CD8-positive, alpha-beta T cell (primary cell): ENCODE measurements at regions of chr12 and their contacts with region 1.

Region 1: DNA sequence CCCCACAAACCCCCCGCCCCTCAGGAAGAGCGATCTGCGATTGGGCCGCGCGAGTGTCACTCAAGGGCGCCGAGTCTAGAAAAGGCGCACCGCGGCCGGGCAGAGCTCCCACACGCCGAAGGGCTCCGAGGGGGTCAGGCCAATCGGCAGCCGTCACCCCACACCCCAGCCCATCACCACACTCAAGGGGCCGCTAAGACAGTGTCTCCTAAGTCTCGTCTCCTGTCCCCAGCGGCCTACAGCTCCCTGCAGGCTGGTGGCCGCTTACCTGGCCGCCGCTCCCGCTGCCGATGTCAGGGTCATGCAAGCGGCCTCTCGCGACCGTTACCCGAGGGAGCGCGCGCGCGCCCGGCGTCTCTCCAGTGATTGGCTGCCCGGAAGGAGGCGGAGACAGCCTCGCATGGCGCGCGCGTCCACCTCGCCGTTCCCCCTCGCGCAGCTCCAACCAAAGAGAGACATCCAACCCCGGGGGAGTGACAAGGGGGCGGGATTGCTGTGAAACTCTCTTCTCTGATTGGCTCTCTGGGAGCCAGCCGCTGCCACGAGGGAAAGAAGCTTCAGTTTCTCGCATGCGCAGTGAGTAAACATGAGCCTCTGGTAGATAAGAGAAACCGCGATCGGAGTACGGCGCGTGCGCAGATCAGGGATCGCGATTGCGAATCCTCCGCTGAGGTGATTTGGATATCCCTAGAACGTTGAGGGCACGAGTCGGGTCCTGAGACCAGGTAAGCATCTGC is at the starts of genes MPHOSPH9 and MTRFR:
- DNase-seq: peak; percentile 96 to 100 (median 98)
- ATAC-seq: peak; percentile 90
- H3K4me3 ChIP-seq: peak within 1 kb of the TSS; percentile 98 to 99
- H3K4me3 Mint-ChIP-seq: peak within 1 kb of the TSS; percentile 94
- H3K27ac ChIP-seq: peak within 1 kb of the TSS; percentile 91 to 94
- H3K27ac Mint-ChIP-seq: peak within 1 kb of the TSS; percentile 100
- H3K4me1 ChIP-seq: peaks cover 80% of the 10 kb centered on the region
- H3K4me1 Mint-ChIP-seq: peaks cover 74% of the 10 kb centered on the region
- H3K27me3 ChIP-seq: no peaks in the 10 kb centered on the region
- H3K27me3 Mint-ChIP-seq: no peaks in the 10 kb centered on the region
- CTCF ChIP-seq: no peak
- total RNA-seq, gene MPHOSPH9: 82.2 to 84.4 TPM
- total RNA-seq, gene MTRFR: 37.7 to 39.4 TPM

Region 2: GRCh38 chr12:122688291-122688690 is 544.7 kb before region 1 on chr12:
- CTCF ChIA-PET with region 1: no interaction called
- POLR2A ChIA-PET with region 1: no interaction called
- intact Hi-C with region 1: no loop called
- DNase-seq: no peak
- ATAC-seq: no peak
- H3K4me3 ChIP-seq: no peak overlapping the region
- H3K4me3 Mint-ChIP-seq: no peak overlapping the region
- H3K27ac ChIP-seq: no peak overlapping the region
- H3K27ac Mint-ChIP-seq: no peak overlapping the region
- H3K4me1 ChIP-seq: no peaks in the 10 kb centered on the region
- H3K4me1 Mint-ChIP-seq: no peaks in the 10 kb centered on the region
- H3K27me3 ChIP-seq: no peaks in the 10 kb centered on the region
- H3K27me3 Mint-ChIP-seq: no peaks in the 10 kb centered on the region
- CTCF ChIP-seq: no peak

Region 3: GRCh38 chr12:122860346-122861090 is 372.5 kb before region 1 on chr12:
- CTCF ChIA-PET with region 1: interaction called, 7 read pairs
- POLR2A ChIA-PET with region 1: no interaction called
- intact Hi-C with region 1: loop called (anchors 1 kb)
- DNase-seq: peak; percentile 65 to 92 (median 82)
- ATAC-seq: peak; percentile 61
- H3K4me3 ChIP-seq: no peak overlapping the region
- H3K4me3 Mint-ChIP-seq: no peak overlapping the region
- H3K27ac ChIP-seq: no peak overlapping the region
- H3K27ac Mint-ChIP-seq: peak overlapping the region; percentile 57
- H3K4me1 ChIP-seq: peaks cover 5% of the 10 kb centered on the region
- H3K4me1 Mint-ChIP-seq: peaks cover 3% of the 10 kb centered on the region
- H3K27me3 ChIP-seq: no peaks in the 10 kb centered on the region
- H3K27me3 Mint-ChIP-seq: no peaks in the 10 kb centered on the region
- CTCF ChIP-seq: peak; percentile 64

Region 4: GRCh38 chr12:122980183-122981046 is 252.6 kb before region 1 on chr12 and contains the start of gene ARL6IP4:
- CTCF ChIA-PET with region 1: interaction called, 11 read pairs
- POLR2A ChIA-PET with region 1: interaction called, 32 read pairs
- intact Hi-C with region 1: loop called (anchors 1 to 2 kb)
- DNase-seq: peak; percentile 27 to 84 (median 64)
- ATAC-seq: peak; percentile 75
- H3K4me3 ChIP-seq: peak within 1 kb of the TSS; percentile 67 to 82
- H3K4me3 Mint-ChIP-seq: peak within 1 kb of the TSS; percentile 88
- H3K27ac ChIP-seq: peak within 1 kb of the TSS; percentile 67 to 69
- H3K27ac Mint-ChIP-seq: peak within 1 kb of the TSS; percentile 87
- H3K4me1 ChIP-seq: peaks cover 60% of the 10 kb centered on the region
- H3K4me1 Mint-ChIP-seq: peaks cover 61% of the 10 kb centered on the region
- H3K27me3 ChIP-seq: no peaks in the 10 kb centered on the region
- H3K27me3 Mint-ChIP-seq: no peaks in the 10 kb centered on the region
- CTCF ChIP-seq: no peak
- total RNA-seq, gene ARL6IP4: 130 to 131 TPM

Region 5: DNA sequence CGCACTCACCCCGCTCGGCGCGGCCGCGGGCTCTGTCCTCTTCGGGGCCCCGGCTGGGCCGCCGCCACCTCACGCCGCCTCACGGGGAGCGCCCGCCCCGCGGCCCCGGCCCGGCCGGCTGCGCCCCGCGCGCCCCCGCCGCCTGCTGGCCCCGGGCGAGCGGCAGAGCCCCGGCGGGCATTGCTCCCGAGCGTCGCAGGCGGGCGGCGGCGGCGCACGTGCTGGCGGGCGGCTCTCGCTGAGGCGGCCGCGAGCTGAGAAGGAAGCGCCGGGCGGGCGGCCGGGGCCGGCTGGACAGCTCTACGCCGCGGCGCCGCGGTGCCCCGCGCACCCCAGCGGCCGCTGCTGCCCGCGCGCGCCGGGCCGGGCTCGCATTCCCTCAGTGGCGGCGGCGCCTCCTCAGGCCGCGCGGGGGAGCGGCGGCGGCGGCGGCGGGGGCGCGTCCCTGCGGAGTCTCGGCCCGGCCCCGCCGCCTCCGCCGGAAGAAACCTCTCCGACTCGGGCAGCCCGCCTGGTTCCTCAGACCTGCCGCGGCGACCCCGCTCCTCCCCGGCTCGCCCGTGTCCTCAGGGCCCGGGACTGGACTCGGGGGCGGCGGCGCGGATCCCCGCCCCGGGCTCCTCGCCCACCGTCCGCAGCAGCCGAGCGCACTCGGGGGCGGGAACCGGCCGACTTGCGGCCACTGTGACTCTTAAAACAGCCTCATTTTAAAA is 82.1 kb before region 1 on chr12 and contains the start of gene PITPNM2:
- CTCF ChIA-PET with region 1: interaction called, 6 read pairs
- POLR2A ChIA-PET with region 1: interaction called, 18 read pairs
- intact Hi-C with region 1: loop called (anchors 2 to 5 kb)
- DNase-seq: peak; percentile 14 to 82 (median 61)
- ATAC-seq: peak; percentile 86
- H3K4me3 ChIP-seq: peak within 1 kb of the TSS; percentile 60 to 83
- H3K4me3 Mint-ChIP-seq: peak within 1 kb of the TSS; percentile 84
- H3K27ac ChIP-seq: peak within 1 kb of the TSS in 1 of 2 experiments; percentile 47
- H3K27ac Mint-ChIP-seq: peak within 1 kb of the TSS; percentile 80
- H3K4me1 ChIP-seq: peaks cover 37% of the 10 kb centered on the region
- H3K4me1 Mint-ChIP-seq: peaks cover 43% of the 10 kb centered on the region
- H3K27me3 ChIP-seq: no peaks in the 10 kb centered on the region
- H3K27me3 Mint-ChIP-seq: no peaks in the 10 kb centered on the region
- CTCF ChIP-seq: no peak
- total RNA-seq, gene PITPNM2: 28.1 to 29.2 TPM

Region 6: DNA sequence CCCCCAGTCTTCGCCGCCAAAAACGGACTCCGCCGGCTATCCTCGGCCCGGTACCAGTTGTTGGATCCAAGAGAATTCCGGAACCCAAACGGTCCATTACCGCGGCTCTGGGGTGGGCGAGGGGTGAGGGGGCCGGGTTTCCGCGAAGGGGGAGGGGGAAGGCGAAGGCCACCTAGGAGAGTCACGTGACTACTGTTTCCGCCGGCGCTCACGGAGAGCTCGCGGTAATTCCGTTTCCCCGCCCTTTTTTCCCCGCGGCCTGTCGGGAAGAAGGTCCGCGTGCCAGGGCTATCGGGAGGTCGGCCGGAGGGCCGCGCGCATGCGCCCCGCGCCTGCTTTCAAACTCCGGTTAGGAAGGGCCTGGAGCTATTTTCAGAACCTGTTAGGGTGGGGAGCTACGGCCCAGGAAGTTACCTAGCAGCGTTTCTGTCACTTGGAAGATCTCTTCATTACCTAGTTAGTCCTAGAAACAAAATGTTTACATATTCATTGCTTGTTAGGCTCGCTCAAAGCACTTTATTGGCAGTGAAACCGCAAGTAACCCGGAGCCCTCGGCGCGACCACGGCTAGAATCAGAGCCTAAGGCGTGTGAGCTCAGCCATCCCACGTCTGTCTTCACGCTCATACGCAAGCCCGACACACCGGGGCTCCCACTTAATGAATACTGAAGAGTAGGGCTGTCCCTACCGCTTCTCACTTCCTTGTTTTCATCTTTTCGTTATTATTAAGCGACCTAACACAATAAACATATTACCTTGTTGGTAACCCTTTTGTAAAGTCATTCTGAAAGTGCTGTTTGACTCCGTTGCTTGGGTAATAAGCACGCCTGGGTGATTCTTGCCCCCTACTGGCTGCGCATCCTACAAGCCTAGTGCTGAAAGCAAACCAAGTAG is 132.3 kb after region 1 on chr12:
- CTCF ChIA-PET with region 1: interaction called, 3 read pairs
- POLR2A ChIA-PET with region 1: interaction called, 15 read pairs
- intact Hi-C with region 1: loop called in 1 of 2 experiments (anchors 1 kb)
- DNase-seq: peak; percentile 95 to 100 (median 97)
- ATAC-seq: peak; percentile 74
- H3K4me3 ChIP-seq: peak overlapping the region; percentile 69 to 79
- H3K4me3 Mint-ChIP-seq: peak overlapping the region; percentile 90
- H3K27ac ChIP-seq: peak overlapping the region; percentile 87 to 93
- H3K27ac Mint-ChIP-seq: peak overlapping the region; percentile 92
- H3K4me1 ChIP-seq: peaks cover 18% of the 10 kb centered on the region
- H3K4me1 Mint-ChIP-seq: peaks cover 24% of the 10 kb centered on the region
- H3K27me3 ChIP-seq: no peaks in the 10 kb centered on the region
- H3K27me3 Mint-ChIP-seq: no peaks in the 10 kb centered on the region
- CTCF ChIP-seq: peak; percentile 93

Region 7: DNA sequence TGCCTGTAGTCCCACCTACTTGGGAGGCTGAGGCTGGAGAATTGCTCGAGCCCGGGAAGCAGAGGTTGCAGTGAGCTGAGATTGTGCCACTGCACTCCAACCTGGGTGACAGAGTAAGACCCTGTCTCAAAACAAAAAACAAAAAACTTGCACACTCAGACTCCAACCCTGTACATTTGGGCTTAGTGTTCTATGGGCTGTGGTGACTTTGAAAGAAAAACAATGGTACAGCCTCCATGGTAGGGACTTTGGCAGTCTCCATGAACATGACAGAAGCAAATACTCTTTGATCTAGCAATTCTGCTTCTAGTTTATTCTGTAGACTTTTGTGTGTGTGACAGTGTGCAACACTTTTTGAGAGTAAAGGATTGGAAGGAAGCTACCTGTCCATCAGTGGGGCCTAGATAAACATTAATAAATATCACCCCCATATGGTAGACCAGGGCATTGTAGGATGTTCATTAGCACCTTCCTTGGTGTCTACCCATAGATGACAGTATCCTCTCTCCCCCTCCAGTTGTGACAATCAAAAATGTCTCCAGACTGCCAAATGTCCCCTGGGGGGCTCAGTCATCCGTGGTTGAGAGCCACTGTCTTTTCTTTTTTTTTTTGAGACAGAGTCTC is 235.7 kb after region 1 on chr12:
- CTCF ChIA-PET with region 1: no interaction called
- POLR2A ChIA-PET with region 1: no interaction called
- intact Hi-C with region 1: no loop called
- DNase-seq: peak in 2 of 9 experiments; percentile 41 to 57
- ATAC-seq: peak; percentile 49
- H3K4me3 ChIP-seq: no peak overlapping the region
- H3K4me3 Mint-ChIP-seq: no peak overlapping the region
- H3K27ac ChIP-seq: no peak overlapping the region
- H3K27ac Mint-ChIP-seq: peak overlapping the region; percentile 37
- H3K4me1 ChIP-seq: no peaks in the 10 kb centered on the region
- H3K4me1 Mint-ChIP-seq: peaks cover 18% of the 10 kb centered on the region
- H3K27me3 ChIP-seq: no peaks in the 10 kb centered on the region
- H3K27me3 Mint-ChIP-seq: no peaks in the 10 kb centered on the region
- CTCF ChIP-seq: no peak